WTC11 (cell line): ENCODE measurements at regions of chr13 and their contacts with region 1.

Region 1: GRCh38 chr13:112942689-112943308 is 26.2 kb upstream of the MCF2L start:
- DNase-seq: peak; percentile 99
- ATAC-seq: peak; percentile 79
- H3K4me3 Mint-ChIP-seq: peak overlapping the region; percentile 76
- H3K27ac Mint-ChIP-seq: no peak overlapping the region
- H3K4me1 Mint-ChIP-seq: peaks cover 17% of the 10 kb centered on the region
- H3K27me3 Mint-ChIP-seq: 0 out of 2 replicates have a peak, but pooled peaks cover 3% of the 10 kb centered on the region
- CTCF ChIP-seq: peak; percentile 82

Region 2: DNA sequence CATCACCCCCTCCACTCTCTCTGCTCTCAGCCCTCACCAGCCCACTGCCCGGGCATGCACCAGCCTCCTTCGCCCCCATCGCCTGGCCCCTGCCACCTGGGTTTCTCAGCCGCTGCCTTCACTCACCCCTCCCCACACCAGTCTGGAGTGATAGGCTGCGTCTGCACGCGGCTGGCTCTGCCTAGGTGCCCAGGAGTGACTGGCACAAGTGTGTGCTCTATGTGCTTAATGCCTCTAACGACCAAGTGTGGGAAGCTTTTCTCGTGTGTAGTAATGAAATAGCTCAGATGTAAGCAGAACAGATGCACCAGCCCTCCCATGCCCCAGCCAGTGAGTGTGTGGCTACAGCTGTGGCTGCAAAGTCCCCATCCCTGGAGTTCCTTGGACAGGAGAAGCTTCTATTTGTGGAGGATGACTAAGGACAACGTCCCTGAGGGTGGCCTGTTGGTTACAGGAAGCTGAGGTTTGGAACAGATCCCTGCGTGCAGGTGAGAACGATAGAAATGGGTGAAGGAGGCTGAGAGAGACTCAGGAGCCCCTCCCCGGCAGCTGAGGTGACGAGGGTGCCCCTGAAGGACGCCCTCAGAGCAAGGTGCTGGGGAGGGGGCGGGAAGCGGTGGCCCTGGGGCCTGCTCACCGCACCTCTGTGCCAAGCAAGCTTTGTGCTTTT is 217.3 kb before region 1 on chr13:
- CTCF ChIA-PET with region 1: no interaction called
- POLR2A ChIA-PET with region 1: no interaction called
- DNase-seq: no peak
- ATAC-seq: no peak
- H3K4me3 Mint-ChIP-seq: no peak overlapping the region
- H3K27ac Mint-ChIP-seq: peak overlapping the region; percentile 94
- H3K4me1 Mint-ChIP-seq: peaks cover 91% of the 10 kb centered on the region
- H3K27me3 Mint-ChIP-seq: no peaks in the 10 kb centered on the region
- CTCF ChIP-seq: no peak

Region 3: DNA sequence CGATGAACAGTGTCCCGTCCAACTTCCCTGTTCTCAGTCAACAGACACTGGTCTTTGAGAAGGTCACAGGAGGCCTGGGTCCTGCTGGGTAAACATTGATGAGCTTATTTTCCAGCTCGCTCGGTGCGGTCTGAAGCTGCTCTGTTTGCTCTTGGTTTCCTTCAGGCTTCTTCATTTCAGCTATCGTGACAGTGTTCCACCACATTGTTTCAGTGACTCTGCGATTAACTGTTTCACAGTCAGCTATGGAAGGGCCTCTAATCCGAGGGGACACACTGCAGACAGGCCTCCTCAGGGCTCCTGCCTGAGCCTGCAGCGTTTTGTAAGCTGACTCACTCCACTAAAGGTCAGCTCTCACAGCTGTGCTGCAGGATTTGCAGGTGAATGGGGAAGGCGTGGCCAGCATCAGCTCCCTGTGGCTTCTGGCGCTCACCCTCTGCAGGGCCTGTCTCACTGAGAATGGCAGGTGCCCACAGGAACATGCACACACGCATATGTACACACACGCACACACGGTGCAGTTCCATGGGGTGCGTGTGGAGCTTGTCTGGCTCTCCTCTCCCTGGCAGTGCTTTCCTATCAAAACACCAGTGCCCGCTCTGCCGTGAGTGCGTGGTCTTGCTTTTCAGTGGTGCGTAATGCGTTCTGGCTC is 36.7 kb before region 1 on chr13:
- CTCF ChIA-PET with region 1: interaction called, 10 read pairs
- POLR2A ChIA-PET with region 1: no interaction called
- DNase-seq: peak; percentile 76
- ATAC-seq: peak; percentile 90
- H3K4me3 Mint-ChIP-seq: 0 out of 2 replicates have a peak overlapping the region, but pooled peaks have one; percentile 7
- H3K27ac Mint-ChIP-seq: peak overlapping the region; percentile 97
- H3K4me1 Mint-ChIP-seq: peaks cover 75% of the 10 kb centered on the region
- H3K27me3 Mint-ChIP-seq: no peaks in the 10 kb centered on the region; the same call in 1 of the 2 replicates
- CTCF ChIP-seq: no peak

Region 4: DNA sequence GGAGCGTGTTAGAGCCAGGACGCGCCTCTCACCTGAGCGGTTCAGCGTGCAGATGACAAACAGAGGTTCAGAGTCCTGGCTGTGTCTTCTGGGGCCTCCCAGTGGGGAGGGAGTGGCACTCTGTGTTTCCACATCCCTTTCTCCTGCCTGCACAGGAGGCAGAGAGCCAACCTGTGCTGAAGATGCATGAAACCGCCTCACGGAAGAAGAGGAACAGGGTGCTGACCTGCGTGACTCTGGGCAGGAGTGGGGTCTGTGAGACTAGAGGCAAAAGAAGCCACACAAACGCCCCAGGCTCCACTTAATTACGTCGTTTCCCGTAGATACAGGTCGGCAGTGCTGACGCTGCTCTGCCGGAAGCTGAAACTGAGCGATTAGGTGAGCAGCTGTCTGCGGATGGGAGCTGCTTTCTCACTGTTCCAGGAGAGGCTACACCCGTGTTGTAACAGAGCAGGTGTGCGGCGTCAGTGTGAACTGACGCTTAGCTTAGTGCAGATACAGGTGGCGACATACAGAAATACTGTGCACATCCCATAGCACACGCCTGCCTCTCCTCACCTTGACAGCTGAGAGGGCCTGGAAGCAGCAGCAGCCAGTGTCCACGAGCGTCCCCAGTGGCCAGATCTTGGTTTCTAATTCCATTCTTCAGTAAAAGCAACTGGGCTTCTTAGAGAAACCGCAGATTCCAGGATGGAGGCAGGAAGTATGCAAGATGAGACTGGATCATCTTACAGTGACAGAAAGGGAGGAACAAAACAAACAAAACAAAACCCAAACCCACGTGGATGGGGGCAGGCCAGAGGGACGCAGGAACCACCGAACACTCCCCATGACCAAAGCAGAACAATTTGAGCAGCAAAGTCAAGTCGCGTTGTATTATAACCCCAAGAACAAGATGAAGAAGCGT is 11.5 kb before region 1 on chr13:
- CTCF ChIA-PET with region 1: interaction called, 18 read pairs
- POLR2A ChIA-PET with region 1: no interaction called
- DNase-seq: peak; percentile 50
- ATAC-seq: peak; percentile 83
- H3K4me3 Mint-ChIP-seq: no peak overlapping the region
- H3K27ac Mint-ChIP-seq: peak overlapping the region; percentile 86; the same call in 1 of the 2 replicates
- H3K4me1 Mint-ChIP-seq: peaks cover 22% of the 10 kb centered on the region
- H3K27me3 Mint-ChIP-seq: no peaks in the 10 kb centered on the region
- CTCF ChIP-seq: no peak

Region 5: GRCh38 chr13:112956571-112957294 is 13.9 kb after region 1 on chr13:
- CTCF ChIA-PET with region 1: interaction called, 20 read pairs
- POLR2A ChIA-PET with region 1: interaction called, 3 read pairs
- DNase-seq: no peak
- ATAC-seq: peak; percentile 47
- H3K4me3 Mint-ChIP-seq: no peak overlapping the region
- H3K27ac Mint-ChIP-seq: peak overlapping the region; percentile 17; the same call in 1 of the 2 replicates
- H3K4me1 Mint-ChIP-seq: peaks cover 22% of the 10 kb centered on the region
- H3K27me3 Mint-ChIP-seq: no peaks in the 10 kb centered on the region
- CTCF ChIP-seq: no peak

Region 6: DNA sequence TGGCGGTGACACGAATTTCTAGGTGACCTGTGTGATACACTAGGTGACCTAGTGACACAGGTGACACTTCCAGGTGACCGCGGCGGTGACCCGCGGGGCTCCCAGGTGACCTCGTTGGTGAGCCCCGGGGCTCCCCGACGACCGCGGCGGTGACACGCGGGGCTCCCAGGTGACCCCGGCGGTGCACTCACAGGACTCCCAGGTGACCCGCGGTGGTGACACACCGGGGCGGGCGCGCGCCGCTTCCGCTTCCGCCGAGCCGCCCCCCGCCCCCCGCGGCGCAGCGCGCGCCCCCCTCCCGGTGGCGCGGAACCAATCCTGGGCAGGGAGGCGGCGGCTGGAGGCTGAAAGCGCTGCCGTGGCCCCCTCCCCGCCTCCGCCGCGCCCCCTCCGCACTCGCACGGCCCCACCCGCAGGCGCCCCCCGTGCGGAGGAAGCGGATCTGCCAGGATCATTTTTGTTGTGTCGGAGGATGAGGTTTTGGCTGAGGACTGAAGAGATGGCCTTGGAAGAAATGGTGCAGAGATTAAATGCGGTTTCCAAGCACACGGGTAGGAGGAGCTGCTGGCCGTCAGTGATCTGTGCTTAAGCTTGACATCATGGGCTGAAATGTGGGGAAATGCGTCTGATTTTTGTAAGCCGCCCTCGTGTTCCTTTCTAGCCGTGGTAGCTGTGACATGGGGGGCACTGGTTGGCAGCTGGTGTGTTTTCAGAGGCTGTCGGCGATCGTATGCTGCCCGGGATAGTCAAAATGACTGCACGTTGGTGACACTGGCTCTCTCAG is 26.3 kb after region 1 on chr13 and contains the start of gene MCF2L:
- CTCF ChIA-PET with region 1: interaction called, 23 read pairs
- POLR2A ChIA-PET with region 1: no interaction called
- DNase-seq: no peak
- ATAC-seq: peak; percentile 62
- H3K4me3 Mint-ChIP-seq: peak within 1 kb of the TSS; percentile 83
- H3K27ac Mint-ChIP-seq: peak within 1 kb of the TSS; percentile 80
- H3K4me1 Mint-ChIP-seq: peaks cover 11% of the 10 kb centered on the region
- H3K27me3 Mint-ChIP-seq: peaks cover 16% of the 10 kb centered on the region
- CTCF ChIP-seq: no peak
- total RNA-seq, gene MCF2L: 34.8 to 35.4 TPM (median 34.9 TPM) in 3 replicates

Region 7: GRCh38 chr13:113001241-113002140 is 58.7 kb after region 1 on chr13:
- CTCF ChIA-PET with region 1: interaction called, 12 read pairs
- POLR2A ChIA-PET with region 1: no interaction called
- DNase-seq: no peak
- ATAC-seq: peak; percentile 31
- H3K4me3 Mint-ChIP-seq: no peak overlapping the region
- H3K27ac Mint-ChIP-seq: peak overlapping the region; percentile 27; the same call in 1 of the 2 replicates
- H3K4me1 Mint-ChIP-seq: peaks cover 2% of the 10 kb centered on the region; the same call in 1 of the 2 replicates
- H3K27me3 Mint-ChIP-seq: no peaks in the 10 kb centered on the region
- CTCF ChIP-seq: no peak

Region 8: GRCh38 chr13:113083402-113084061 is 140.7 kb after region 1 on chr13:
- CTCF ChIA-PET with region 1: no interaction called
- POLR2A ChIA-PET with region 1: no interaction called
- DNase-seq: no peak
- ATAC-seq: no peak
- H3K4me3 Mint-ChIP-seq: no peak overlapping the region
- H3K27ac Mint-ChIP-seq: no peak overlapping the region
- H3K4me1 Mint-ChIP-seq: no peaks in the 10 kb centered on the region
- H3K27me3 Mint-ChIP-seq: no peaks in the 10 kb centered on the region
- CTCF ChIP-seq: no peak

Region 9: DNA sequence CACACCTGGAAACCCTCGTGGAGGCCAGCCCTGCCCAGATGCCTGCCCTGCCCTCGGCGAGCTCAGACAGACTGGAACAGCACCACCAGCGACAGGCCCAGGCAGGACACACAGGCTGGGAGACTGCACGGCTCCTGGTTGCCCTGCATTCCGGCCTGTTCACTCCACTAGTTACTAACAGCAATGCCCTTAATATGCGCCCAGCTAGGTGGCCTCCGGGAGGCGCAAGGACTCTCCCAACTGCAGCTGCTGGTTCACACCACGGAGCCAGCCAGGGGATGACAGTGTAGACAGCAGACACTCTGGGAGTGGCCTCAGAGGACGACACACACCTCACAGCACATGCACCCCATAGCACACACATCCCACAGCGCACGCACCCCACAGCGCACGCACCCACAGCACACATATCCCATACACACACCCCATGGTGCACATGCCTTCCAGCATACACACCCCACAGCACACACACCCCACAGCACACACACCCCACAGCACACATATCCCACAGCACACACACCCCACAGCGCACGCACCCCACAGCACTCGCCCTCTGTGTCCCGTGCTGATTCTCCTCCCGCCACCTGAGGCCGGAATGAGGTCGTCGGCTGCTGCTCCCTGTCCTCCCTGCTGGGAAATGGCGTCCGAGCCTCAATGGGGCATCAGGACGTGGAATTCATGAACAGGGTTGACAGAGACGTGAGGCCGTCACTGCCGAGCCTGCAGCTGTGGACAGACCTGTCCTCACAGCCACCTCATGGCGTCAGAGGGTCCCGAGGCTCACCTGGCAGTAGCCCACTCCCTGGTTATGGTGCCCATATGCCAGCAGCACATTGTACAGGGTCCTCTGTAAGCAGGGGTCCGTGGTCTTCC is 407.5 kb after region 1 on chr13:
- CTCF ChIA-PET with region 1: no interaction called
- POLR2A ChIA-PET with region 1: no interaction called
- DNase-seq: no peak
- ATAC-seq: peak; percentile 73
- H3K4me3 Mint-ChIP-seq: no peak overlapping the region
- H3K27ac Mint-ChIP-seq: no peak overlapping the region
- H3K4me1 Mint-ChIP-seq: no peaks in the 10 kb centered on the region
- H3K27me3 Mint-ChIP-seq: no peaks in the 10 kb centered on the region
- CTCF ChIP-seq: no peak